Activated B cell treated with CpG ODN at 0.5 μM for 24 hours (primary cell): ENCODE measurements at regions of chr9 and their contacts with region 1.

Region 1: GRCh38 chr9:134111064-134111463 is 24.8 kb upstream of the WDR5 start:
- DNase-seq: no peak
- ATAC-seq: no peak
- H3K4me3 Mint-ChIP-seq: no peak overlapping the region
- H3K27ac Mint-ChIP-seq: no peak overlapping the region
- H3K4me1 Mint-ChIP-seq: no peaks in the 10 kb centered on the region
- H3K27me3 Mint-ChIP-seq: peaks cover 6% of the 10 kb centered on the region
- CTCF ChIP-seq: no peak

Region 2: GRCh38 chr9:133306242-133307204 is 804.5 kb before region 1 on chr9:
- CTCF ChIA-PET with region 1: no interaction called
- POLR2A ChIA-PET with region 1: interaction called, 13 read pairs
- intact Hi-C with region 1: no loop called
- DNase-seq: no peak
- ATAC-seq: no peak
- H3K4me3 Mint-ChIP-seq: no peak overlapping the region
- H3K27ac Mint-ChIP-seq: no peak overlapping the region
- H3K4me1 Mint-ChIP-seq: no peaks in the 10 kb centered on the region
- H3K27me3 Mint-ChIP-seq: peaks cover 16% of the 10 kb centered on the region
- CTCF ChIP-seq: no peak

Region 3: DNA sequence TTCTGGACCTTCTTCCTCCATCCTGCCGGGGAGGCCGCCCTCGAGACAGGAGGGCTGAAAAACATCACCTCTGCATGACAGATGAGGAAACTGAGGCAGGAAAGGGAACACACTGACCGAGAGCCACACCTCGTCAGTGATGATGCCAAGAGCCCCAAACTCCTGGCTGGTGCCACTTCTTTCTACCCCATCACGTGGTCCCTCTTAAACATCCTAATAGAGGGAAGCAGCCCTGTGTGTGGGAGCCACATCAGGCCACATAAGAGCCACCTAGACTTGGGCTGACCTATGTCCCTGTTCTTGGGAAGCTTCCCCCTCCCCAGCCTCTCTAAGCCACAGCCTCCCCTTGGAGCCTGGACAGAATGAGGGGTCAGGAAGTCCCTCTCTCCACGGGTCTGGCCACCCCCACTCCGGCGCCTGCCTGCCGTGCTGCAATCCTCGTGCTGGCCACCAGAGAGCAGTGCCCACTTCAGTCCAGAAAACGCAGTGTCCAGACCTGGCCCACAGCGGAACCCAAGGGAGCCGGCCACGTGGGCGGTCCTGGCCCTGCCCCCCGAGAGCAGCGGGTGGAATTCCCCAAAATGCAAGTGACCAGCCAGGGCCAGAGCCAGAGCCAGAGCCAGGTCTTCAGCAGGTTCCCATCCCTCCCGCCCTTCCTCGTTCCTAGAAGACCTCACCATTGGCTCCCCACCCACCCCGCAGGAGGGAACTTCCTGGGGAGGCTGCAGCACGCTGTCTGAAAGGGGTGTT is 318.2 kb before region 1 on chr9:
- CTCF ChIA-PET with region 1: no interaction called
- POLR2A ChIA-PET with region 1: no interaction called
- intact Hi-C with region 1: no loop called
- DNase-seq: peak; percentile 70
- ATAC-seq: peak; percentile 88
- H3K4me3 Mint-ChIP-seq: peak overlapping the region; percentile 57
- H3K27ac Mint-ChIP-seq: peak overlapping the region; percentile 66
- H3K4me1 Mint-ChIP-seq: peaks cover 74% of the 10 kb centered on the region
- H3K27me3 Mint-ChIP-seq: no peaks in the 10 kb centered on the region
- CTCF ChIP-seq: peak; percentile 30

Region 4: GRCh38 chr9:134128727-134129679 is 17.9 kb after region 1 on chr9:
- CTCF ChIA-PET with region 1: no interaction called
- POLR2A ChIA-PET with region 1: no interaction called
- intact Hi-C with region 1: no loop called
- DNase-seq: no peak
- ATAC-seq: no peak
- H3K4me3 Mint-ChIP-seq: no peak overlapping the region
- H3K27ac Mint-ChIP-seq: no peak overlapping the region
- H3K4me1 Mint-ChIP-seq: peaks cover 18% of the 10 kb centered on the region
- H3K27me3 Mint-ChIP-seq: peaks cover 2% of the 10 kb centered on the region
- CTCF ChIP-seq: no peak